ENCODE measurements at regions of chr3 and their contacts with region 1.

Region 1: DNA sequence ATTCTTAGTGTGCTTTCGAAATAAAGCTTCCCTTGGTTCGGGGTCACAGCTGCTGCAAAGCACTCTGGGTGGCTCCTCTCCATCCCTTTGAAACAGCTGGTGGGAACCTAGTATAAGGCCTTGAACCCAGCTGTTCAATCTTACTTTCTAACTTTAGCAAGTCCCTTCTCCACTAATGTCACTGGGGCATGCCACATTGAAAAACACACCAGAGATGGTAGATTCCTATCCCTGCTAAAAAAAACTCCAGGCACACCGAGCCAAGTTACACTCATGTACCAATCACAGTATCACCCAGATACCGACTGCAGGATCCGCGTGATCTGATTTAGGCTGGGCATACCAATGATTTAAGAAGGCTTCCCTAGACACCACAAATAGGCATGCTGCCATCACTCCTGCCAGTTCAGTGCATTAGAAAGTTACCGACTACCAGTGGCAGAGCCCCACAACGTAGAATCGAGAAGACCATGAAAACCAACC is 65.0 kb downstream of the WWTR1 start:
- DNase-seq: no peak
- H3K4me3 Mint-ChIP-seq: no peak overlapping the region
- H3K27ac Mint-ChIP-seq: peak overlapping the region; percentile 24
- H3K4me1 Mint-ChIP-seq: peaks cover 73% of the 10 kb centered on the region
- H3K27me3 Mint-ChIP-seq: no peaks in the 10 kb centered on the region
- CTCF ChIP-seq: no peak

Region 2: DNA sequence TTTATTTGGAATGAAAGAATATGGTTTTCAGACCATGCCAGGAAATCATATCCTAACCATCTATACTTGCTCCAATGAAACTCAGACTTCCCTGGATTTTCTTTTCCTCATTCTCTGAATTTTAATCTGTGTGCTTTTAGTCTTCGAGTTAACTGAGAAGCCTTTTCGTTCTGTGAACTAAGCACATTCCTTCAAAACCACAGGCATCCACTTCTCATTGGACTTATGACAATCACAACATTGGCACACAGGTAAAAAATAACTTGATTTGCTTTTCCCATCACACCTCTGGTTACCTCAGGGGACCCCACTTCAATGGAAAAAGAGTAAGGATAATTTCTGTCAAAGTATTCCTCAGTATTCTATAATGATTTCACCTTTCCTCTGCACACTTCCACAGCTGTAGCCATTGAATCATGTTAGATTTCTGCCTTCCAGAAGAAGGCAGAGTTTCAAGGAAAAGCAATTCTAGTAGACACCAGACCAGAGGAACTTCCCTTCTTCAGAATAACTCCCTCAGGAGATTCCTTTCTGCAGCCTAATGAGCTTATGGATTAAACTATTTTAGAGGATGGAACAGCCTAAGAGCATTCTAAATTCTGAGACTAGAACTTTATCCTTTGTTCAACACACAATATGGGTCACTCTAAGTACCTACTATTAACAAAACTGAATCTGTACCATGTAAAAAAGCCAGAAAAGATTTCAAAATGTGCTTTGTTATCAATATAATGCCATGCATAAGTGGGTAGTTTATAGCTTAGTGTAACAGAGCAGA is 143.6 kb after region 1 on chr3:
- CTCF ChIA-PET with region 1: no interaction called
- intact Hi-C with region 1: no loop called
- DNase-seq: peak; percentile 58
- H3K4me3 Mint-ChIP-seq: no peak overlapping the region
- H3K27ac Mint-ChIP-seq: peak overlapping the region; percentile 30
- H3K4me1 Mint-ChIP-seq: peaks cover 27% of the 10 kb centered on the region
- H3K27me3 Mint-ChIP-seq: no peaks in the 10 kb centered on the region
- CTCF ChIP-seq: no peak

Region 3: GRCh38 chr3:150319904-150320303 is 727.1 kb after region 1 on chr3:
- CTCF ChIA-PET with region 1: no interaction called
- intact Hi-C with region 1: loop called (anchors 5 kb)
- DNase-seq: peak; percentile 61
- H3K4me3 Mint-ChIP-seq: no peak overlapping the region
- H3K27ac Mint-ChIP-seq: peak overlapping the region; percentile 15
- H3K4me1 Mint-ChIP-seq: peaks cover 72% of the 10 kb centered on the region
- H3K27me3 Mint-ChIP-seq: no peaks in the 10 kb centered on the region
- CTCF ChIP-seq: no peak

Measured in Calu3 (cell line).